Testis (tissue), 5 donors: ENCODE measurements at regions of chr1 and their contacts with region 1.

Region 1: DNA sequence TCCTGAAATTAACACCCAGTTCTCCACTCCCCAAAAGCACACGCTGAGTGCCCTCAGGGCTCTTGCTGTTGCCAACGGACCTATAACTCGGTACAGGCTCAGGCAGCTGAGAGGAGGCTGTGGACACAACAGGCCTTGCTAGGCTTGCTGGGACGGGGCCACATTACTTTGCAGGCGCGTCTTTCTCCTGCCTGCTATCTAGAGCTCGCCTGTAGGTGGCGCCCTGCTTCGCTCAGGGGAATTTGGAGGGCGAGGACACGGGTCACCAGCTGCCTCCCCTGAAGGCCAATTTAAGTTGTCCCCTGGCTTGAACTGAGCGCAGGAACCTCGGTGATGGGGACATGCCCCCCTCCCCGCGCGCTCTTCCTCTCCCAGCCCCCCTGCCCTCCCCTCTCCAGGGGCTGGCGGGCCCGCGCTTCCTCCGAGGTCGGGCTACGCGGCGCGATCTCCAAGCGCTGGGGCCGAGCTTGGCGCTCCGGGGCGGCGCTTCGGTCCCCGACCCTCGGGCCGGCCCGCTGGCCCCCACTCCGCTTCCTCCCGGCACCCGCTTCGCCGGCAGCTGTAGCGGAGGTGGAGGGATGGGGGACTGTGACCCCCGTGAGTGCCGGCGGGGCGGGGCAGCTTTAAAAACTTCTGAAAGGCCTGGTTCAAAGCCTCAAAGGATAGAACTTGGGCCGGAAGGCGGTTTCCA is 32.4 kb upstream of the NFIA start:
- DNase-seq: peak; percentile 95
- H3K4me3 ChIP-seq: peak overlapping the region; percentile 89 to 91
- H3K27ac ChIP-seq: peak overlapping the region; percentile 96
- H3K4me1 ChIP-seq: peaks cover 29% of the 10 kb centered on the region
- H3K27me3 ChIP-seq: no peaks in the 10 kb centered on the region
- CTCF ChIP-seq: peak; percentile 97
- POLR2A ChIP-seq: no peak

Region 2: GRCh38 chr1:60866917-60867531 is 183.0 kb before region 1 on chr1:
- intact Hi-C with region 1: no loop called
- DNase-seq: no peak
- H3K4me3 ChIP-seq: no peak overlapping the region
- H3K27ac ChIP-seq: no peak overlapping the region
- H3K4me1 ChIP-seq: peaks cover 11% of the 10 kb centered on the region
- H3K27me3 ChIP-seq: no peaks in the 10 kb centered on the region
- CTCF ChIP-seq: no peak
- POLR2A ChIP-seq: no peak

Region 3: GRCh38 chr1:60978421-60979357 is 71.3 kb before region 1 on chr1:
- intact Hi-C with region 1: loop called (anchors 10 kb)
- DNase-seq: no peak
- H3K4me3 ChIP-seq: no peak overlapping the region
- H3K27ac ChIP-seq: no peak overlapping the region
- H3K4me1 ChIP-seq: peaks cover 14% of the 10 kb centered on the region
- H3K27me3 ChIP-seq: no peaks in the 10 kb centered on the region
- CTCF ChIP-seq: no peak
- POLR2A ChIP-seq: no peak

Region 4: GRCh38 chr1:61120998-61121397 is 71.0 kb after region 1 on chr1:
- intact Hi-C with region 1: no loop called
- DNase-seq: peak; percentile 42
- H3K4me3 ChIP-seq: no peak overlapping the region
- H3K27ac ChIP-seq: peak overlapping the region in 1 of 2 donors; percentile 48
- H3K4me1 ChIP-seq: peaks cover 51% of the 10 kb centered on the region
- H3K27me3 ChIP-seq: no peaks in the 10 kb centered on the region
- CTCF ChIP-seq: no peak
- POLR2A ChIP-seq: no peak

Region 5: GRCh38 chr1:61453111-61453961 is 403.3 kb after region 1 on chr1:
- intact Hi-C with region 1: loop called (anchors 5 kb)
- DNase-seq: peak; percentile 95
- H3K4me3 ChIP-seq: no peak overlapping the region
- H3K27ac ChIP-seq: peak overlapping the region; percentile 64 to 75
- H3K4me1 ChIP-seq: peaks cover 43% of the 10 kb centered on the region
- H3K27me3 ChIP-seq: no peaks in the 10 kb centered on the region
- CTCF ChIP-seq: peak; percentile 58 to 71 (median 67)
- POLR2A ChIP-seq: no peak

Region 6: GRCh38 chr1:61641578-61642336 is 591.8 kb after region 1 on chr1:
- intact Hi-C with region 1: loop called (anchors 10 kb)
- DNase-seq: peak; percentile 91
- H3K4me3 ChIP-seq: peak overlapping the region; percentile 34
- H3K27ac ChIP-seq: peak overlapping the region; percentile 61 to 76
- H3K4me1 ChIP-seq: peaks cover 37% of the 10 kb centered on the region
- H3K27me3 ChIP-seq: no peaks in the 10 kb centered on the region
- CTCF ChIP-seq: peak; percentile 56 to 69 (median 66)
- POLR2A ChIP-seq: no peak

Region 7: GRCh38 chr1:61851849-61852669 is 802.1 kb after region 1 on chr1:
- intact Hi-C with region 1: loop called (anchors 10 kb)
- DNase-seq: no peak
- H3K4me3 ChIP-seq: no peak overlapping the region
- H3K27ac ChIP-seq: no peak overlapping the region
- H3K4me1 ChIP-seq: no peaks in the 10 kb centered on the region
- H3K27me3 ChIP-seq: no peaks in the 10 kb centered on the region
- CTCF ChIP-seq: peak in 2 of 3 experiments; percentile 44 to 62
- POLR2A ChIP-seq: no peak